Caco-2 (cell line): ENCODE measurements at regions of chr12 and their contacts with region 1.

Region 1: GRCh38 chr12:6470375-6471163 is at the start of gene VAMP1:
- DNase-seq: peak; percentile 99 to 100
- H3K4me3 ChIP-seq: peak within 1 kb of the TSS; percentile 86
- H3K4me3 Mint-ChIP-seq: peak within 1 kb of the TSS; percentile 78
- H3K27ac Mint-ChIP-seq: peak within 1 kb of the TSS; percentile 64
- H3K4me1 ChIP-seq: no peaks in the 10 kb centered on the region
- H3K4me1 Mint-ChIP-seq: peaks cover 6% of the 10 kb centered on the region
- H3K27me3 ChIP-seq: no peaks in the 10 kb centered on the region
- H3K27me3 Mint-ChIP-seq: no peaks in the 10 kb centered on the region
- CTCF ChIP-seq: no peak
- total RNA-seq, gene VAMP1: 8.4 and 9.7 TPM in 2 replicates

Region 2: DNA sequence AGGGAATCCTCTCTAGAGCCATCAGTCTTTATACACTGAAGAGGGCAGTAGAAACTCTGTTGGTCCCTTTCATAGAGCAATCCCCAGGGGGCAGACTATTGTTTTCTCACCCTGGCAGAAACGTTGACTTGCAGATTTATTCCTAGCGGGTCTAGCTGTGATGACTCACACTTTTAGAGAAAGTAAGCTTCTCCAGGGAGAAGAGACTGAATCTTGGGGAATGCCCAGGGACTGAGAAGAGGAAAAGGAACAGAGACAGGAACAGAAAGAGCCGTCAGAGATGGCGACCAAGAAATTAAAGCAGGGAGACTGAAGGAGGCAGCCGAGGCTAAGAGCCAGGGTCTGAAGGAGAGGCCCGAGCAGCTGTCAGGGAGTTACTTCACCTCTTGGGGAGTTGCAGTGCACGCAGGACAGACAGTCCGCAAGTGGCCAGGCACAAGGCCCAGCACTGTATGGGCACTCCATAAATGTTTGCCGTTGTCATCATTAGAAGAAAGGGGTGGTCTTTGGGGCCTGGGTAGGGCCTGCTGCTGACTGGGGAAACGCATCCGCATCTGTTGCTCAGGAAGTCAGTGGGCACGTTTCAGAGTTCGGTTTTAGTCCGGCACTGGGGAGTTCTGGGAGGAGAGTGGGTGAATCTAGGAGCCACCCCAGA is 147.1 kb before region 1 on chr12:
- CTCF ChIA-PET with region 1: interaction called, 26 read pairs
- POLR2A ChIA-PET with region 1: interaction called, 6 read pairs
- intact Hi-C with region 1: loop called (anchors 1 kb)
- DNase-seq: peak; percentile 70 to 80
- H3K4me3 ChIP-seq: no peak overlapping the region
- H3K4me3 Mint-ChIP-seq: no peak overlapping the region
- H3K27ac Mint-ChIP-seq: peak overlapping the region; percentile 88
- H3K4me1 ChIP-seq: peaks cover 20% of the 10 kb centered on the region
- H3K4me1 Mint-ChIP-seq: peaks cover 19% of the 10 kb centered on the region
- H3K27me3 ChIP-seq: no peaks in the 10 kb centered on the region
- H3K27me3 Mint-ChIP-seq: no peaks in the 10 kb centered on the region
- CTCF ChIP-seq: peak; percentile 61 to 87

Region 3: GRCh38 chr12:6367065-6367968 is 103.3 kb before region 1 on chr12:
- CTCF ChIA-PET with region 1: interaction called, 11 read pairs
- POLR2A ChIA-PET with region 1: interaction called, 18 read pairs
- intact Hi-C with region 1: no loop called
- DNase-seq: peak in 1 of 2 experiments; percentile 29
- H3K4me3 ChIP-seq: no peak overlapping the region
- H3K4me3 Mint-ChIP-seq: no peak overlapping the region
- H3K27ac Mint-ChIP-seq: peak overlapping the region; percentile 12
- H3K4me1 ChIP-seq: peaks cover 25% of the 10 kb centered on the region
- H3K4me1 Mint-ChIP-seq: peaks cover 38% of the 10 kb centered on the region
- H3K27me3 ChIP-seq: no peaks in the 10 kb centered on the region
- H3K27me3 Mint-ChIP-seq: no peaks in the 10 kb centered on the region
- CTCF ChIP-seq: peak in 1 of 2 experiments; percentile 1

Region 4: GRCh38 chr12:6423267-6424007 is 47.1 kb before region 1 on chr12:
- CTCF ChIA-PET with region 1: interaction called, 45 read pairs
- POLR2A ChIA-PET with region 1: interaction called, 5 read pairs
- intact Hi-C with region 1: loop called (anchors 1 kb)
- DNase-seq: peak; percentile 87
- H3K4me3 ChIP-seq: no peak overlapping the region
- H3K4me3 Mint-ChIP-seq: no peak overlapping the region
- H3K27ac Mint-ChIP-seq: no peak overlapping the region
- H3K4me1 ChIP-seq: peaks cover 8% of the 10 kb centered on the region
- H3K4me1 Mint-ChIP-seq: peaks cover 8% of the 10 kb centered on the region
- H3K27me3 ChIP-seq: no peaks in the 10 kb centered on the region
- H3K27me3 Mint-ChIP-seq: no peaks in the 10 kb centered on the region
- CTCF ChIP-seq: peak; percentile 88 to 97

Region 5: GRCh38 chr12:6451348-6452244 is 19.0 kb before region 1 on chr12 and contains the start of gene TAPBPL:
- CTCF ChIA-PET with region 1: interaction called, 17 read pairs
- POLR2A ChIA-PET with region 1: interaction called, 16 read pairs
- intact Hi-C with region 1: loop called (anchors 1 kb)
- DNase-seq: peak; percentile 88 to 89
- H3K4me3 ChIP-seq: peak within 1 kb of the TSS; percentile 82
- H3K4me3 Mint-ChIP-seq: peak within 1 kb of the TSS; percentile 79
- H3K27ac Mint-ChIP-seq: peak within 1 kb of the TSS; percentile 93
- H3K4me1 ChIP-seq: peaks cover 9% of the 10 kb centered on the region; the same call in 1 of the 2 replicates
- H3K4me1 Mint-ChIP-seq: peaks cover 4% of the 10 kb centered on the region
- H3K27me3 ChIP-seq: no peaks in the 10 kb centered on the region
- H3K27me3 Mint-ChIP-seq: no peaks in the 10 kb centered on the region
- CTCF ChIP-seq: no peak
- total RNA-seq, gene TAPBPL: 9.1 and 9.7 TPM in 2 replicates

Region 6: GRCh38 chr12:6507102-6507998 is 36.8 kb after region 1 on chr12:
- CTCF ChIA-PET with region 1: interaction called, 3 read pairs
- POLR2A ChIA-PET with region 1: interaction called, 10 read pairs
- intact Hi-C with region 1: no loop called
- DNase-seq: peak; percentile 58 to 59
- H3K4me3 ChIP-seq: no peak overlapping the region
- H3K4me3 Mint-ChIP-seq: peak overlapping the region; percentile 4
- H3K27ac Mint-ChIP-seq: peak overlapping the region; percentile 75
- H3K4me1 ChIP-seq: peaks cover 18% of the 10 kb centered on the region
- H3K4me1 Mint-ChIP-seq: peaks cover 12% of the 10 kb centered on the region
- H3K27me3 ChIP-seq: no peaks in the 10 kb centered on the region
- H3K27me3 Mint-ChIP-seq: no peaks in the 10 kb centered on the region
- CTCF ChIP-seq: no peak

Region 7: GRCh38 chr12:6563448-6564050 is 93.0 kb after region 1 on chr12:
- CTCF ChIA-PET with region 1: no interaction called
- POLR2A ChIA-PET with region 1: interaction called, 10 read pairs
- intact Hi-C with region 1: no loop called
- DNase-seq: peak; percentile 63 to 80
- H3K4me3 ChIP-seq: no peak overlapping the region
- H3K4me3 Mint-ChIP-seq: no peak overlapping the region
- H3K27ac Mint-ChIP-seq: no peak overlapping the region
- H3K4me1 ChIP-seq: no peaks in the 10 kb centered on the region
- H3K4me1 Mint-ChIP-seq: peaks cover 9% of the 10 kb centered on the region
- H3K27me3 ChIP-seq: no peaks in the 10 kb centered on the region
- H3K27me3 Mint-ChIP-seq: no peaks in the 10 kb centered on the region
- CTCF ChIP-seq: peak; percentile 89 to 96

Region 8: DNA sequence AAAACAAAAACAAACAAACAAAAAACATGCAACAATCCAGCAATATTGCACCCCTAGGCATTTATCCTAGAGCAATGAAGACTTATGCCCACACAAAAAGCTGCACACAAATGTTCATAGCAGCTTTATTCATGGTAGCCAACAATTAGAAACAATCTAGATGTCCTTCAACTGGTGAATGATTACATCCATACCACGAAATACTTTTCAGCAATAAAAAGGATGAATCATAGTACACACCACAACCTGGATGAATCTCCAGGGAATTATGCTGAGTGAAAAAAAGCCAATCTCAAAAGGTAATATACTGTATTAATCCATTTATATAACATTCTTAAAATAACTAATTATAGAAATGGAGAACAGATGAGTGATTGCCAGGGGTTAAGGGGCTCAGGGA is 336.6 kb after region 1 on chr12:
- CTCF ChIA-PET with region 1: no interaction called
- POLR2A ChIA-PET with region 1: no interaction called
- intact Hi-C with region 1: no loop called
- DNase-seq: no peak
- H3K4me3 ChIP-seq: no peak overlapping the region
- H3K4me3 Mint-ChIP-seq: no peak overlapping the region
- H3K27ac Mint-ChIP-seq: no peak overlapping the region
- H3K4me1 ChIP-seq: no peaks in the 10 kb centered on the region; the same call in 1 of the 2 replicates
- H3K4me1 Mint-ChIP-seq: peaks cover 10% of the 10 kb centered on the region
- H3K27me3 ChIP-seq: no peaks in the 10 kb centered on the region
- H3K27me3 Mint-ChIP-seq: no peaks in the 10 kb centered on the region
- CTCF ChIP-seq: no peak